Tibial artery (tissue), 4 donors: ENCODE measurements at regions of chr17 and their contacts with region 1.

Region 1: DNA sequence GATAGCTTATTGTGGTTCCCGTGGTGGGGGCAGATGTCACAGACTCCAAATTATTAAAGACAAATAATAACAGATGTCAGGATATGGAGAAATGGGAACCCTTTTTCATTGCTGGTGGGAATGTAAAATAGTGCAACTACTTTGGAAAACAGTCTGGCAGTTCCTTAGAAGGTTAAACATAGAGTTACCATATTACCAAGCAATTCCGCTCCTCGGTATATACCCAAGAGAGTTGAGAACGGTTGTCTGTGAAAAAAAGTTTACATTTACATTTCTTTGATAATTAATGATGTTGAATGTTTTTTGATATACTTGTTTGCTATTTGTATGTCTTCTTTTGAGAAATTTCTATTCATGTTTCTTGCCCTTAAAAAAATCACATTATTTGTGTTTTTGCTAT is 41.2 kb downstream of the OR1D5 start:
- DNase-seq: no peak
- H3K4me3 ChIP-seq: no peak overlapping the region
- H3K27ac ChIP-seq: no peak overlapping the region
- H3K4me1 ChIP-seq: no peaks in the 10 kb centered on the region
- H3K27me3 ChIP-seq: no peaks in the 10 kb centered on the region
- CTCF ChIP-seq: no peak

Region 2: GRCh38 chr17:2975469-2975958 is 46.7 kb before region 1 on chr17:
- intact Hi-C with region 1: loop called (anchors 2 kb)
- DNase-seq: peak in 1 of 2 donors; percentile 48
- H3K4me3 ChIP-seq: peak overlapping the region in 1 of 2 donors; percentile 24
- H3K27ac ChIP-seq: no peak overlapping the region
- H3K4me1 ChIP-seq: no peaks in the 10 kb centered on the region
- H3K27me3 ChIP-seq: no peaks in the 10 kb centered on the region
- CTCF ChIP-seq: no peak

Region 3: DNA sequence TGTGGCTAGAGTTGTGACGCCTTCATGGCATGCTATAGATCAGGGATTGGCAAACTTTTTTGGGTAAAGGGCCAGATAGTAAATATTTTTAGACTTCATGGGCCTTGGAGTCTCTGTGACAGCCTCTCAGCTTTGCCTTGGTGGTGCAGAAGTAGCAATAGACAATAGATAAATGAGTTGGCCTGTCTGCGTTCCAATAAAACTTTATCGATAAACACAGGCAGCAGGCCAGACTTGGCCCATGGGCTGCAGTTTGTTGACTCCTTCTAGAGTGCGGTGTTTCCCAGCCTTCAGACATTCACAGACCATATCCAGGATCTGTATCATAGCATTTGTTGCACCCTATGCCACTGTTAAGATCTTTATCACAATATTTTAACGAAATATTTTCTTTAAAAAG is 35.3 kb before region 1 on chr17:
- intact Hi-C with region 1: no loop called
- DNase-seq: no peak
- H3K4me3 ChIP-seq: no peak overlapping the region
- H3K27ac ChIP-seq: no peak overlapping the region
- H3K4me1 ChIP-seq: peaks cover 0 to 13% (median 3%) of the 10 kb centered on the region in 4 donors
- H3K27me3 ChIP-seq: no peaks in the 10 kb centered on the region
- CTCF ChIP-seq: no peak